ENCODE measurements at regions of chr9 and their contacts with region 1.

Region 1: GRCh38 chr9:73167614-73168013 is 15.9 kb downstream of the ANXA1 start:
- DNase-seq: no peak
- H3K4me3 ChIP-seq: no peak overlapping the region
- H3K27ac ChIP-seq: no peak overlapping the region
- H3K4me1 ChIP-seq: no peaks in the 10 kb centered on the region
- H3K27me3 ChIP-seq: no peaks in the 10 kb centered on the region
- CTCF ChIP-seq: no peak

Region 2: DNA sequence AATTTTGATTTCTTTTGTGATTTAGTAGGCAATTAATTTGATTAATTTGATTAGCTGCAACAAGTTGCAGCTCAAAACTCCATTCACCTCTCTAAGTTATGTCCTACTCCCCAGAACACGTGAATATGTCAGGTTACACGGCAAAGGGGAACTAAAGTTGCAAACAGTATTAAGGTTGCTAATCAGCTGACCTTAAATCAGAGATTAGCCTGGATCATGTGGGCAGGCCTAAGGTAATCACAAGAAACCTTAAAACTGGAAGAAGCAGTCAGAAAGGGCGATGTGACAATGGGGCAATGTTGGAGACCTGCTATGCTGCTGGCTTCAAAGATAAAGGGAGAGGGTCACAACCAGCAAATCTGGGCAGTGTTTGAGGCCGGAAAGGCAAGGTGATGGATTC is 63.3 kb before region 1 on chr9:
- CTCF ChIA-PET with region 1: interaction called, 3 read pairs
- dilution Hi-C with region 1: no loop called
- in situ Hi-C with region 1: loop called in 1 of 2 experiments (anchors 5 kb)
- intact Hi-C with region 1: no loop called
- DNase-seq: no peak
- H3K4me3 ChIP-seq: no peak overlapping the region
- H3K27ac ChIP-seq: no peak overlapping the region
- H3K4me1 ChIP-seq: peaks cover 5% of the 10 kb centered on the region
- H3K27me3 ChIP-seq: no peaks in the 10 kb centered on the region
- CTCF ChIP-seq: no peak

Region 3: GRCh38 chr9:73219985-73220626 is 52.5 kb after region 1 on chr9:
- CTCF ChIA-PET with region 1: no interaction called
- dilution Hi-C with region 1: no loop called
- in situ Hi-C with region 1: no loop called
- intact Hi-C with region 1: no loop called
- DNase-seq: peak; percentile 98
- H3K4me3 ChIP-seq: no peak overlapping the region
- H3K27ac ChIP-seq: peak overlapping the region; percentile 76
- H3K4me1 ChIP-seq: peaks cover 12% of the 10 kb centered on the region
- H3K27me3 ChIP-seq: no peaks in the 10 kb centered on the region
- CTCF ChIP-seq: no peak

Region 4: DNA sequence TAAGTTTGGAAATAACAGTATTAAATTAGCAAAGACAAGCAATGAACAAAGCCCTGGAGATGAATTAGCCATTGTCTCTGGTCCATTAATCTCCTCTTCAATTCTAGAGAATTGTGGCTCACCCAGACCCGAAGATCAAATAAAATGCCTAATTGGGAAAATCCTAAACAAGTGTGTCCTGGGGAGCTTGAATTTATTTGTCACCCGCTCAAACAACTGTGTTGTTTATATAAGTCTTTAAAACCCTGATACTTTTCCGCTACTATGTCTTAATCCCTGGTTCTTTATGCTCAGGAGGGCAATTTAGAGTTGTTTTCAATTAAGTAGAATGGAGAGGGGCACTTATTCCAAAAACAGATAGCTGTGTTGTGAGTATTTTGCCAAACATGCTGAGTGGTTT is 112.5 kb after region 1 on chr9:
- CTCF ChIA-PET with region 1: no interaction called
- dilution Hi-C with region 1: no loop called
- in situ Hi-C with region 1: no loop called
- intact Hi-C with region 1: no loop called
- DNase-seq: no peak
- H3K4me3 ChIP-seq: no peak overlapping the region
- H3K27ac ChIP-seq: no peak overlapping the region
- H3K4me1 ChIP-seq: no peaks in the 10 kb centered on the region
- H3K27me3 ChIP-seq: no peaks in the 10 kb centered on the region
- CTCF ChIP-seq: no peak

Measured in mammary epithelial cell (primary cell).